ENCODE measurements at regions of chr5 and their contacts with region 1.

Region 1: GRCh38 chr5:121251954-121252353 is 599.7 kb upstream of the FTMT start:
- DNase-seq: peak; percentile 74
- H3K4me3 ChIP-seq: no peak overlapping the region
- H3K27ac ChIP-seq: peak overlapping the region; percentile 71
- H3K4me1 ChIP-seq: peaks cover 10% of the 10 kb centered on the region
- H3K27me3 ChIP-seq: no peaks in the 10 kb centered on the region
- CTCF ChIP-seq: no peak

Region 2: DNA sequence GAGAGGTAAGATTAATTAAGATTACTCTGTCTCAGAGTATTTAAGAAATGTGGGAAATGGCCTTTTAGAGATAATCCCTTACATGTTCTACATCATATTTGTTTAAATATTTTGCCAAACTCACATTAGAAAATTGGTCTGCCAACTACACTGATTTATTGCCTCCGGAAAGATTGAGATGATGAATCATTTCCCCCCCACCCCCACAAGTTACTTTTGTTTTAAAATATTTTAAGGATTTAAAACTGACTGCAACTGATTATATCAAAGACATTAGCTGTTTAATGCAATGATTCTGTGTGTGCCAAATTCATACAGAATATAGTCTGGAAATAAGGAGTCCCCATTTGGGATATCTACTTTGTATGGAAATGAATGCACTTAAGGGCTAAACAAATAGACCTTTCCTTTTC is 113.5 kb before region 1 on chr5:
- CTCF ChIA-PET with region 1: no interaction called
- dilution Hi-C with region 1: no loop called
- in situ Hi-C with region 1: no loop called
- intact Hi-C with region 1: no loop called
- DNase-seq: no peak
- H3K4me3 ChIP-seq: no peak overlapping the region
- H3K27ac ChIP-seq: no peak overlapping the region
- H3K4me1 ChIP-seq: no peaks in the 10 kb centered on the region
- H3K27me3 ChIP-seq: no peaks in the 10 kb centered on the region
- CTCF ChIP-seq: no peak

Region 3: GRCh38 chr5:121299153-121299552 is 47.2 kb after region 1 on chr5:
- CTCF ChIA-PET with region 1: interaction called, 13 read pairs
- dilution Hi-C with region 1: no loop called
- in situ Hi-C with region 1: no loop called
- intact Hi-C with region 1: no loop called
- DNase-seq: no peak
- H3K4me3 ChIP-seq: no peak overlapping the region
- H3K27ac ChIP-seq: no peak overlapping the region
- H3K4me1 ChIP-seq: no peaks in the 10 kb centered on the region
- H3K27me3 ChIP-seq: peaks cover 1% of the 10 kb centered on the region
- CTCF ChIP-seq: no peak

Measured in mammary epithelial cell (primary cell).